PC-9 (cell line): ENCODE measurements at regions of chr12 and their contacts with region 1.

Region 1: GRCh38 chr12:96047229-96048211 is 12.1 kb upstream of the LTA4H start:
- DNase-seq: peak; percentile 37 to 100
- H3K4me3 ChIP-seq: peak overlapping the region; percentile 49; the same call in 1 of the 2 replicates
- H3K27ac ChIP-seq: peak overlapping the region; percentile 99
- H3K4me1 ChIP-seq: peaks cover 69% of the 10 kb centered on the region
- H3K27me3 ChIP-seq: no peaks in the 10 kb centered on the region
- CTCF ChIP-seq: no peak

Region 2: GRCh38 chr12:95343461-95344230 is 703.9 kb before region 1 on chr12:
- CTCF ChIA-PET with region 1: no interaction called
- POLR2A ChIA-PET with region 1: no interaction called
- intact Hi-C with region 1: no loop called
- DNase-seq: no peak
- H3K4me3 ChIP-seq: no peak overlapping the region
- H3K27ac ChIP-seq: no peak overlapping the region
- H3K4me1 ChIP-seq: peaks cover 8% of the 10 kb centered on the region
- H3K27me3 ChIP-seq: no peaks in the 10 kb centered on the region
- CTCF ChIP-seq: no peak

Region 3: GRCh38 chr12:95896846-95897245 is 150.7 kb before region 1 on chr12:
- CTCF ChIA-PET with region 1: no interaction called
- POLR2A ChIA-PET with region 1: no interaction called
- intact Hi-C with region 1: no loop called
- DNase-seq: no peak
- H3K4me3 ChIP-seq: no peak overlapping the region
- H3K27ac ChIP-seq: no peak overlapping the region
- H3K4me1 ChIP-seq: no peaks in the 10 kb centered on the region
- H3K27me3 ChIP-seq: no peaks in the 10 kb centered on the region
- CTCF ChIP-seq: no peak

Region 4: GRCh38 chr12:96015672-96016071 is 31.8 kb before region 1 on chr12:
- CTCF ChIA-PET with region 1: no interaction called
- POLR2A ChIA-PET with region 1: no interaction called
- intact Hi-C with region 1: loop called (anchors 1 kb)
- DNase-seq: no peak
- H3K4me3 ChIP-seq: no peak overlapping the region
- H3K27ac ChIP-seq: no peak overlapping the region
- H3K4me1 ChIP-seq: no peaks in the 10 kb centered on the region
- H3K27me3 ChIP-seq: no peaks in the 10 kb centered on the region
- CTCF ChIP-seq: peak; percentile 50; the same call in 1 of the 2 replicates